GM12878 (cell line): ENCODE measurements at regions of chr6 and their contacts with region 1.

Region 1: DNA sequence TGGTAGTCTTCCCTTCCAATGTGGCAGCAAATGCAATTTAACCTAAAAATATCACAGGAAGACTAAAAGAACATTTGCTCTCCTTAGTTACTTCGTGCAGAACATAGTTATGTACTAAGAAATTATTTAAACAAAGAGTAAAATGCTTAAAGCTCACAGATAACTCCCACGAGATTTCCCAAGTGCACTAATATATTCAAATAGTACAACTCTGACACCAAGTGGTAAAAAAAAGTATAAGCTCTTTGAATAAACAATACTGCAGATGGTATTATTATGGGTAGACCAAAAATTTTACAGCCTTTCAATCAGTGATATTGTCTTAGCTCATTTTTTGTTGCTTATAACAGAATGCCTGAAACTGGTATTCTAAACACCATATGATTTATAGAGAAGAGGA is 52.8 kb upstream of the FILIP1 start:
- DNase-seq: no peak
- ATAC-seq: peak; percentile 57
- H3K4me3 ChIP-seq: no peak overlapping the region
- H3K27ac ChIP-seq: no peak overlapping the region
- H3K4me1 ChIP-seq: peaks cover 2% of the 10 kb centered on the region; the same call in 1 of the 2 replicates
- H3K27me3 ChIP-seq: no peaks in the 10 kb centered on the region
- CTCF ChIP-seq: no peak; a peak in 1 of 6 replicates
- EP300 ChIP-seq: no peak
- POLR2A ChIP-seq: no peak
- RAD21 ChIP-seq: no peak

Region 2: GRCh38 chr6:74103417-74103816 is 1443.0 kb before region 1 on chr6:
- CTCF ChIA-PET with region 1: no interaction called
- POLR2A ChIA-PET with region 1: no interaction called
- RAD21 ChIA-PET with region 1: no interaction called
- SMC1A ChIA-PET with region 1: no interaction called
- in situ Hi-C with region 1: no loop called
- intact Hi-C with region 1: no loop called
- DNase-seq: no peak
- ATAC-seq: no peak
- H3K4me3 ChIP-seq: no peak overlapping the region
- H3K27ac ChIP-seq: no peak overlapping the region
- H3K4me1 ChIP-seq: no peaks in the 10 kb centered on the region
- H3K27me3 ChIP-seq: no peaks in the 10 kb centered on the region
- CTCF ChIP-seq: no peak
- EP300 ChIP-seq: no peak
- POLR2A ChIP-seq: no peak
- RAD21 ChIP-seq: no peak

Region 3: DNA sequence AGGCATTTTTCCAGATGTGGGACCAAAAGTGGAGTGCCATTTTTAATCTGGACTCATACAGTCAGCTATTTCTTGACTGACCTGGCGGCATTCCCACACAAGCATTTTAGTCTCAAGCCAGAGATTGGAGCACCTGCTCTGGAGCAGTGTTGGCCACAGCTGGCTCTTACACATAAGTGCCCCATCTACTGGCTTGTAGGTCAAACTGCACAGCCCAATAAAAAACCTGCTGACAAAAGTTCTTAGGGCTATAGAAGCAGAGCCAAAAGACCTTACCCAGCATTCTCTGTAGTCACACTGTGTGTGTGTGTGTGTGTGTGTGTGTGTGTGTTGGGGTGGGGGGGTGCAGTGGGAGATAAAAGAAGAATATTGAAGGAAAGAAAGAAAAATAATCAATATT is 16.7 kb after region 1 on chr6:
- CTCF ChIA-PET with region 1: interaction called, 11 read pairs
- POLR2A ChIA-PET with region 1: no interaction called
- RAD21 ChIA-PET with region 1: interaction called, 3 read pairs
- SMC1A ChIA-PET with region 1: interaction called, 4 read pairs
- in situ Hi-C with region 1: no loop called
- intact Hi-C with region 1: no loop called
- DNase-seq: no peak
- ATAC-seq: peak; percentile 99
- H3K4me3 ChIP-seq: no peak overlapping the region
- H3K27ac ChIP-seq: no peak overlapping the region
- H3K4me1 ChIP-seq: no peaks in the 10 kb centered on the region
- H3K27me3 ChIP-seq: no peaks in the 10 kb centered on the region; a peak in 1 of 4 replicates
- CTCF ChIP-seq: peak; percentile 51 to 60 (median 57)
- EP300 ChIP-seq: no peak
- POLR2A ChIP-seq: no peak
- RAD21 ChIP-seq: peak; percentile 45

Region 4: GRCh38 chr6:75579951-75580350 is 33.6 kb after region 1 on chr6:
- CTCF ChIA-PET with region 1: no interaction called
- POLR2A ChIA-PET with region 1: no interaction called
- RAD21 ChIA-PET with region 1: no interaction called
- SMC1A ChIA-PET with region 1: no interaction called
- in situ Hi-C with region 1: no loop called
- intact Hi-C with region 1: no loop called
- DNase-seq: no peak
- ATAC-seq: peak; percentile 94
- H3K4me3 ChIP-seq: no peak overlapping the region
- H3K27ac ChIP-seq: no peak overlapping the region
- H3K4me1 ChIP-seq: no peaks in the 10 kb centered on the region
- H3K27me3 ChIP-seq: no peaks in the 10 kb centered on the region
- CTCF ChIP-seq: no peak
- EP300 ChIP-seq: no peak
- POLR2A ChIP-seq: no peak
- RAD21 ChIP-seq: no peak

Region 5: DNA sequence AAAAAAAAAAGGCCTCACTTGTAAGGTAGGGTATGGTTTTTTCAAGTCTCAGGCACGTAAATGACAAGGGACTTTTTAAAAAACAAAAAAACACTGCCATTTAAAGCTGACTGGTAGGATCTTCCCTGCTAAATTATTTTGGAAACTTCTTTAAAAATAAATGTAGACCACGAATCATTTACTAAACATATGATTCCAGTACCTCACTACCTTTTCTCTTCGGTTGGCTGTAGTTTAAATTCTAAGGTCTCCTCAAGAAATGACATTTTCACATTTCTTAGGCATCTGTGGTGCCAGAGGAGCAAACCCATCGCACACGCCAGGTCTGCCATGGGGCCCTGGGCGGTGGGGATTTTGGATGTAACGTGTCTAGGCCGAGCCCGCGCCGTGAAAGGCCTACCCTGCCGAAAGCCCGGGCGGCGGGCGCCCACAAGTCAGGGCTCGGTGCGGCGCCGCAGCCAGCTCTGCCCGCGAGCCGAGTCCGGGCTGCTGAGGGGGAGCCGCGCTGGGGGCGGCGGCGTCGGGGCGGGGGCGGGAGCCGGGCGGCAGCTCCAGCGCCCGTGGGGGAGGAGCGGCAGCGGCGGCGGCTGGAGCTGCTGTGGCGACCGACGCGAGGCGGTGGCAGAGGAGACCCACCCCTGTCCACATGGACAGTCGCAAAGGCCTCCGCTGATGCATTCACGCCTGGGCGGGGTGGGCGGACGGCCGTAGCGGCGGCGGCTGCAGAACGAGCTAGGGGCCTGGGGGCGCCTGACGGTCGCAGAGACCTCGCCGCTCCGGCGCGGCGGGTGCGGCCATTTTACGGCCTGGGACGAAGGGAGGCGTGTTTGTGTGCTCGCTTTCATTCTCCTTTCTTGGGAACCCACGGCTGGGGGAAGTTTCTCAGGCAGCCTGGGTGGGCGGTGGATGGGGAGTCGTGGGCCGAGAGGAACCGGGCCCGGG is 55.2 kb after region 1 on chr6 and contains the start of gene SENP6:
- CTCF ChIA-PET with region 1: no interaction called
- POLR2A ChIA-PET with region 1: no interaction called
- RAD21 ChIA-PET with region 1: no interaction called
- SMC1A ChIA-PET with region 1: no interaction called
- in situ Hi-C with region 1: no loop called
- intact Hi-C with region 1: no loop called
- DNase-seq: no peak
- ATAC-seq: peak; percentile 83
- H3K4me3 ChIP-seq: peak within 1 kb of the TSS; percentile 86
- H3K27ac ChIP-seq: peak within 1 kb of the TSS; percentile 89
- H3K4me1 ChIP-seq: no peaks in the 10 kb centered on the region
- H3K27me3 ChIP-seq: no peaks in the 10 kb centered on the region
- CTCF ChIP-seq: no peak
- EP300 ChIP-seq: no peak
- POLR2A ChIP-seq: peak; percentile 96
- RAD21 ChIP-seq: no peak
- polyA plus RNA-seq, gene SENP6: 10.7 to 17.2 TPM

Region 6: DNA sequence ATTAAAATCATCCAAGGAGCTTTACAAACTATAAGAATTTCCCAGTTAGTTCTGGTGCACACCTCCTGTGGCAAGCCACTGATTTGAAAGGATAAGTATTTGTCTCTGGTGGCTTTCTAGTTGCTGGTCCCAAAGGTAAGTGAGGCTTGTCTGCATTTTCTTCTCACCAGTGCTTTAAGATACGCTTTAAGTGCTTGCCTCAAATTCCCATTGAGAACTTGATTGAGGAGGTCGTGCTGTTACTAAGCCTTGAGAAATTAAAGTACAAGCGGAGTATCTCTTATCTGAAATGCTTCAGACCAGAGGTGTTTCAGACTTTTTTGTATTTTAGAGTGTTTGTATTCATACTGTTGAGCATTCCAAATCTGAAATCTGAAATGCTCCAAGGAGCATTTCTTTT is 172.8 kb after region 1 on chr6:
- CTCF ChIA-PET with region 1: no interaction called
- POLR2A ChIA-PET with region 1: no interaction called
- RAD21 ChIA-PET with region 1: no interaction called
- SMC1A ChIA-PET with region 1: no interaction called
- in situ Hi-C with region 1: no loop called
- intact Hi-C with region 1: no loop called
- DNase-seq: no peak
- ATAC-seq: no peak
- H3K4me3 ChIP-seq: no peak overlapping the region
- H3K27ac ChIP-seq: no peak overlapping the region
- H3K4me1 ChIP-seq: no peaks in the 10 kb centered on the region
- H3K27me3 ChIP-seq: no peaks in the 10 kb centered on the region
- CTCF ChIP-seq: no peak
- EP300 ChIP-seq: no peak
- POLR2A ChIP-seq: no peak
- RAD21 ChIP-seq: no peak